ENCODE measurements at regions of chr1 and their contacts with region 1.

Region 1: DNA sequence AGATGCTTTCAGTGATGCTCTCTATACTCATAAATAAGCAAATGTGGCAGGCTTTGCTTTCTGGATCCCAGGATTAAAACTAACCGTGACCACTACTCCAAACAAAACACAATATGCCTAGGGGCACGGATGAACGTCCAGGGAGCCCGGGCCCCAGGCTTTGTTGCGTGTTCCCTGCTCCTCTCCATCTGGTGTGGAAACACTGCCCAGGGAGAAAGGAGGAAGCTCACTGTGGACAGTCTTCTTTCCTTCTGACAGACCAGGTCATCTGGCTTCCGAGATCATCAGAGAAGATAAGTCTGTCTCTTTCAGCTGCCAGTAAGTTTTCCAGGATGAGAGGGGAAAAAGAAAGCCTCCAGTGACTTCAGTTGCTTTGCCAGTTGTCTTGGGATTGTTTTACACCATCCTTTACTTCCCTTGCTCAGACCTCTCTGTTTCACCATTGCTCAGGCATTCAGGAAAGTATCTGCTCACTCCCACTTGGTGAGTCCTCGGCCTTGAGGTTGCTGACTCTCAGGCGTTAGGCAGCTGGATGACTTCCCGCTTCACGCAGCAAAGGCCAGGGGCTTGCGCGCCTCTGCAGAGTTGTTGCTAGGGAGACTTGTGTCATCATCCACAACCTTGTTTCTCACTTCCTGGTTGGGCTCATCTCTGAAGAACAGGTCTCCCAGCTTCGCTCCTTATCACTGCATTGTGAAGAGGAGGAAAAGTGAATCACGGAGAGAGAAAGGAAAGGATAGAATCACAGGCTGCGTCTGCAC is 20.6 kb upstream of the PGD start:
- H3K4me3 Mint-ChIP-seq: no peak overlapping the region
- H3K27ac Mint-ChIP-seq: peak overlapping the region; percentile 82
- H3K4me1 Mint-ChIP-seq: peaks cover 40% of the 10 kb centered on the region
- H3K27me3 Mint-ChIP-seq: no peaks in the 10 kb centered on the region

Region 2: GRCh38 chr1:10419351-10419750 is 41.1 kb after region 1 on chr1:
- intact Hi-C with region 1: no loop called
- H3K4me3 Mint-ChIP-seq: no peak overlapping the region
- H3K27ac Mint-ChIP-seq: peak overlapping the region; percentile 11
- H3K4me1 Mint-ChIP-seq: peaks cover 19% of the 10 kb centered on the region
- H3K27me3 Mint-ChIP-seq: no peaks in the 10 kb centered on the region

Region 3: GRCh38 chr1:10430216-10431069 is 52.2 kb after region 1 on chr1 and contains the start of gene CENPS:
- intact Hi-C with region 1: loop called (anchors 1 kb)
- H3K4me3 Mint-ChIP-seq: peak within 1 kb of the TSS; percentile 92
- H3K27ac Mint-ChIP-seq: peak within 1 kb of the TSS; percentile 78
- H3K4me1 Mint-ChIP-seq: peaks cover 43% of the 10 kb centered on the region
- H3K27me3 Mint-ChIP-seq: no peaks in the 10 kb centered on the region